ENCODE measurements at regions of chr14 and their contacts with region 1.

Region 1: GRCh38 chr14:51395361-51395849 is 155.4 kb downstream of the TMX1 start:
- DNase-seq: peak; percentile 95
- H3K4me3 ChIP-seq: peak overlapping the region in 1 of 3 experiments; percentile 12
- H3K27ac ChIP-seq: peak overlapping the region; percentile 99
- H3K4me1 ChIP-seq: peaks cover 60% of the 10 kb centered on the region
- H3K27me3 ChIP-seq: no peaks in the 10 kb centered on the region
- CTCF ChIP-seq: peak in 1 of 2 donors; percentile 21

Region 2: GRCh38 chr14:51304941-51305340 is 90.5 kb before region 1 on chr14:
- CTCF ChIA-PET with region 1: no interaction called
- dilution Hi-C with region 1: loop called (anchors 5 kb)
- in situ Hi-C with region 1: no loop called
- intact Hi-C with region 1: no loop called
- DNase-seq: peak; percentile 93
- H3K4me3 ChIP-seq: no peak overlapping the region
- H3K27ac ChIP-seq: peak overlapping the region; percentile 44
- H3K4me1 ChIP-seq: peaks cover 30% of the 10 kb centered on the region
- H3K27me3 ChIP-seq: no peaks in the 10 kb centered on the region
- CTCF ChIP-seq: no peak

Region 3: GRCh38 chr14:51382506-51382905 is 12.9 kb before region 1 on chr14:
- CTCF ChIA-PET with region 1: no interaction called
- dilution Hi-C with region 1: no loop called
- in situ Hi-C with region 1: no loop called
- intact Hi-C with region 1: loop called (anchors 1 kb)
- DNase-seq: peak; percentile 99
- H3K4me3 ChIP-seq: no peak overlapping the region
- H3K27ac ChIP-seq: peak overlapping the region; percentile 92
- H3K4me1 ChIP-seq: peaks cover 49% of the 10 kb centered on the region
- H3K27me3 ChIP-seq: no peaks in the 10 kb centered on the region
- CTCF ChIP-seq: no peak

Region 4: GRCh38 chr14:51490205-51490604 is 94.8 kb after region 1 on chr14:
- CTCF ChIA-PET with region 1: no interaction called
- dilution Hi-C with region 1: no loop called
- in situ Hi-C with region 1: loop called in 1 of 2 experiments (anchors 5 kb)
- intact Hi-C with region 1: loop called (anchors 1 kb)
- DNase-seq: peak; percentile 67
- H3K4me3 ChIP-seq: peak overlapping the region; percentile 55 to 97 (median 85)
- H3K27ac ChIP-seq: peak overlapping the region; percentile 99
- H3K4me1 ChIP-seq: peaks cover 31% of the 10 kb centered on the region
- H3K27me3 ChIP-seq: no peaks in the 10 kb centered on the region
- CTCF ChIP-seq: no peak

Region 5: GRCh38 chr14:51576117-51576430 is 180.7 kb after region 1 on chr14:
- CTCF ChIA-PET with region 1: no interaction called
- dilution Hi-C with region 1: no loop called
- in situ Hi-C with region 1: no loop called
- intact Hi-C with region 1: loop called (anchors 5 kb)
- DNase-seq: no peak
- H3K4me3 ChIP-seq: no peak overlapping the region
- H3K27ac ChIP-seq: no peak overlapping the region
- H3K4me1 ChIP-seq: peaks cover 21% of the 10 kb centered on the region
- H3K27me3 ChIP-seq: no peaks in the 10 kb centered on the region
- CTCF ChIP-seq: no peak

Measured in mammary epithelial cell (primary cell).